ENCODE measurements at regions of chr5 and their contacts with region 1.

Region 1: GRCh38 chr5:139177809-139178588 is 20.2 kb downstream of the SIL1 start:
- DNase-seq: peak; percentile 56 to 73
- ATAC-seq: peak; percentile 84 to 97 (median 94)
- H3K4me3 ChIP-seq: no peak overlapping the region
- H3K27ac ChIP-seq: peak overlapping the region; percentile 35 to 83 (median 72)
- H3K4me1 ChIP-seq: peaks cover 5 to 59% (median 47%) of the 10 kb centered on the region in 9 donors
- H3K27me3 ChIP-seq: no peaks in the 10 kb centered on the region
- CTCF ChIP-seq: no peak

Region 2: GRCh38 chr5:139126711-139127111 is 51.3 kb before region 1 on chr5:
- intact Hi-C with region 1: loop called in 1 of 10 experiments (anchors 1 kb)
- DNase-seq: peak; percentile 60 to 64
- ATAC-seq: peak; percentile 72 to 94 (median 86)
- H3K4me3 ChIP-seq: no peak overlapping the region
- H3K27ac ChIP-seq: peak overlapping the region; percentile 52 to 88 (median 83)
- H3K4me1 ChIP-seq: peaks cover 8 to 51% (median 37%) of the 10 kb centered on the region in 9 donors
- H3K27me3 ChIP-seq: no peaks in the 10 kb centered on the region
- CTCF ChIP-seq: no peak

Region 3: GRCh38 chr5:139137702-139138101 is 40.3 kb before region 1 on chr5:
- intact Hi-C with region 1: loop called in 3 of 10 experiments (anchors 5 kb)
- DNase-seq: no peak
- ATAC-seq: peak in 5 of 8 donors; percentile 18 to 40 (median 29)
- H3K4me3 ChIP-seq: no peak overlapping the region
- H3K27ac ChIP-seq: peak overlapping the region in 1 of 10 donors; percentile 65
- H3K4me1 ChIP-seq: peaks cover 10 to 70% (median 50%) of the 10 kb centered on the region in 9 donors
- H3K27me3 ChIP-seq: no peaks in the 10 kb centered on the region
- CTCF ChIP-seq: peak in 7 of 9 donors; percentile 13 to 32 (median 23)

Region 4: GRCh38 chr5:139149477-139150199 is 28.4 kb before region 1 on chr5:
- intact Hi-C with region 1: loop called in 4 of 10 experiments (anchors 2 to 5 kb)
- DNase-seq: no peak
- ATAC-seq: peak in 7 of 8 donors; percentile 24 to 78 (median 49)
- H3K4me3 ChIP-seq: no peak overlapping the region
- H3K27ac ChIP-seq: peak overlapping the region in 6 of 10 donors; percentile 6 to 66 (median 42)
- H3K4me1 ChIP-seq: peaks cover 6 to 52% (median 42%) of the 10 kb centered on the region in 9 donors
- H3K27me3 ChIP-seq: no peaks in the 10 kb centered on the region
- CTCF ChIP-seq: no peak

Region 5: DNA sequence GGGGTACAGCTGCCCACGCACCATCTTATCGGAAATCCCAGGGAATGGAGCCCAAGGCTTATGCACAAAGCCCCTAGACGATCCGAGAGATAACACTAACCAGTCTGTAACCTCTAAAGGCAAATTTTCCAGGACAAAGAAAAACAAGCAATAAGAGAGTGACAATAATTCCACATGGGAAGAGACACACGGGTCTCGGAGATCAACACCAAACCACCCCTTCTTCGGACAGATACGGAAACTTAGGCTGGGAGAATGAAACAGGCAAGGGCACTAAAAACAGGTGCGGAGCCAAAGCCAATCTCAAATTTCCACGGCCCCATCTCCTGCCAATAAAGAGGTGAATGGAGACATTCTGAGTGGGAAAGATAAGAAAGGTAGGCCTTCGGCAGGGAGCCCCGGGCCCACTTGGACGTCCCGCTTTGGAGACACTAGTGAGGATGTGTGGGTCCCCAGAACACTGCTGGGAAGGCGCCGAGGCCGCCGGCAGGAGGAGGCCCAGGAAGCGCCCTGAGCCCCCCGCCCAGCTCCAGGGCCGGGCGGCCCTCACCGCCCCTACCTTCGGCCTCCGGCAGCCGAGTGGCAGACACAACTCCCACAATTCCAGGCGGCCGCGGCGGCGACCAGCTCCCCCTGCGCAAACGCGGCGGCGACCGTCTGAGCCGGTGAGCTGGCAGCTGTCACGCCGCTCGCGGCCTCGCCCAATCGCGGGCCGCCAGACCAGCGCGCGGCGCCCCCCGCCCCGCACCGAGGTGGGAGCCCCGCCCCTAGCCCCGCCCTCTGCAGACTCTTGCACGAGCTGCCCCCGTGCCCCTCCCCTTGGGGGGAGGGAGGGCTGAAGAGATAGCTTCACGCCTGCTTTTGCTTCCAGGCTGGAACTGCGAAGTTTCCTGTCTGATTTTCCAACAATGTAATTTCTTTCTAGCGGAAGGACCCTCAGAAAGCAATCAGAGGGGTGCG is 20.0 kb after region 1 on chr5 and contains the start of gene SIL1:
- intact Hi-C with region 1: no loop called
- DNase-seq: peak; percentile 96 to 99
- ATAC-seq: peak; percentile 99
- H3K4me3 ChIP-seq: peak within 1 kb of the TSS; percentile 51 to 90 (median 80)
- H3K27ac ChIP-seq: peak within 1 kb of the TSS; percentile 42 to 98 (median 95)
- H3K4me1 ChIP-seq: peaks cover 0 to 34% (median 9%) of the 10 kb centered on the region in 9 donors
- H3K27me3 ChIP-seq: no peaks in the 10 kb centered on the region
- CTCF ChIP-seq: peak in 2 of 9 donors; percentile 10 to 18
- total RNA-seq, gene SIL1: 26.7 to 68.1 (median 43.4) TPM

Measured in heart right ventricle (tissue), 16 donors.